ENCODE measurements at regions of chr2 and their contacts with region 1.

Region 1: GRCh38 chr2:209208211-209208610 is 215.6 kb upstream of the MAP2 start:
- DNase-seq: peak; percentile 9
- H3K4me3 ChIP-seq: peak overlapping the region in 2 of 3 experiments; percentile 24 to 34
- H3K27ac ChIP-seq: no peak overlapping the region
- H3K4me1 ChIP-seq: no peaks in the 10 kb centered on the region
- H3K27me3 ChIP-seq: no peaks in the 10 kb centered on the region
- CTCF ChIP-seq: peak; percentile 63 to 76

Region 2: GRCh38 chr2:208392300-208393080 is 815.7 kb before region 1 on chr2:
- CTCF ChIA-PET with region 1: no interaction called
- dilution Hi-C with region 1: no loop called
- in situ Hi-C with region 1: no loop called
- intact Hi-C with region 1: loop called (anchors 1 kb)
- DNase-seq: no peak
- H3K4me3 ChIP-seq: no peak overlapping the region
- H3K27ac ChIP-seq: no peak overlapping the region
- H3K4me1 ChIP-seq: no peaks in the 10 kb centered on the region
- H3K27me3 ChIP-seq: no peaks in the 10 kb centered on the region
- CTCF ChIP-seq: peak; percentile 17 to 20

Region 3: GRCh38 chr2:208407667-208408066 is 800.5 kb before region 1 on chr2:
- CTCF ChIA-PET with region 1: no interaction called
- dilution Hi-C with region 1: no loop called
- in situ Hi-C with region 1: no loop called
- intact Hi-C with region 1: loop called (anchors 1 kb)
- DNase-seq: no peak
- H3K4me3 ChIP-seq: no peak overlapping the region
- H3K27ac ChIP-seq: no peak overlapping the region
- H3K4me1 ChIP-seq: peaks cover 5% of the 10 kb centered on the region
- H3K27me3 ChIP-seq: peaks cover 32% of the 10 kb centered on the region
- CTCF ChIP-seq: peak; percentile 11 to 39

Region 4: DNA sequence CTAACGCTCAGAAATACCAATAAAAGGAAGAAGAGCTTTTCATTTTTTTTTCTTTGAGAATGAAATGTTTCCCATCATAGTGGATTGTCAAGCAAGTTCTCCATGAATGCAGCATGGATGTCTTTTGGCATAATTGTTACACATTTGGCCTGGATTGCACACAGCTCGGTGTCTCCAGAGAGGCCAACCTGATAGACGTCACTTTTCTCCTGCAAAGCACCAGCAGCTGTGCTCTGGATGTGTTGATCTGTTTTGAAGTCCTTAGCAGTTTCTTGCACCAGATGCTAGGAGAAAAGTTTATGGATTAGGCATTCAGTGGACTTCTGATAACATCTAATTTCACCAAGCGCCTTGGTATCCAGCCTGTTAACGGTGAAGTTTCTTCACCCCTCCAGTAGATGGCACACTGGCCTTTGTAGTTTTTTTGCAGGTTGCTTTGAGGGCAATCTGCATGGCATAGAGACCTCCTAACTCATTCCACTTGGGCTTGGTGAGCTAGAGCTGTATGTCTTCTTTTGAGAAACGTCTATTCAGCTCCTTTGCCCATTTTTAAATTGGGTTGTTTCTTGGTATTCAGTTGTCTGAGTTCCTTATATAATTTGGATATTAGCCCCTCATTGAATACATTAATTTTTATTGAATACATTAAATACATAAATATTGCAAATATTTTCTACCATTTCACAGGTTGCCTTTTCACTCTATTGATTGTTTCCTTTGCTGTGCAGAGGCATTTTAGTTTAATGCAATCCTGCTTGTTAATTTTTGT is 741.9 kb before region 1 on chr2:
- CTCF ChIA-PET with region 1: no interaction called
- dilution Hi-C with region 1: no loop called
- in situ Hi-C with region 1: loop called in 1 of 2 experiments (anchors 25 kb)
- intact Hi-C with region 1: loop called (anchors 2 kb)
- DNase-seq: peak; percentile 38
- H3K4me3 ChIP-seq: no peak overlapping the region
- H3K27ac ChIP-seq: no peak overlapping the region
- H3K4me1 ChIP-seq: no peaks in the 10 kb centered on the region
- H3K27me3 ChIP-seq: peaks cover 2% of the 10 kb centered on the region
- CTCF ChIP-seq: peak; percentile 68 to 84

Region 5: GRCh38 chr2:208648368-208648767 is 559.8 kb before region 1 on chr2:
- CTCF ChIA-PET with region 1: interaction called, 11 read pairs
- dilution Hi-C with region 1: no loop called
- in situ Hi-C with region 1: no loop called
- intact Hi-C with region 1: no loop called
- DNase-seq: no peak
- H3K4me3 ChIP-seq: no peak overlapping the region
- H3K27ac ChIP-seq: no peak overlapping the region
- H3K4me1 ChIP-seq: no peaks in the 10 kb centered on the region
- H3K27me3 ChIP-seq: no peaks in the 10 kb centered on the region
- CTCF ChIP-seq: no peak

Region 6: DNA sequence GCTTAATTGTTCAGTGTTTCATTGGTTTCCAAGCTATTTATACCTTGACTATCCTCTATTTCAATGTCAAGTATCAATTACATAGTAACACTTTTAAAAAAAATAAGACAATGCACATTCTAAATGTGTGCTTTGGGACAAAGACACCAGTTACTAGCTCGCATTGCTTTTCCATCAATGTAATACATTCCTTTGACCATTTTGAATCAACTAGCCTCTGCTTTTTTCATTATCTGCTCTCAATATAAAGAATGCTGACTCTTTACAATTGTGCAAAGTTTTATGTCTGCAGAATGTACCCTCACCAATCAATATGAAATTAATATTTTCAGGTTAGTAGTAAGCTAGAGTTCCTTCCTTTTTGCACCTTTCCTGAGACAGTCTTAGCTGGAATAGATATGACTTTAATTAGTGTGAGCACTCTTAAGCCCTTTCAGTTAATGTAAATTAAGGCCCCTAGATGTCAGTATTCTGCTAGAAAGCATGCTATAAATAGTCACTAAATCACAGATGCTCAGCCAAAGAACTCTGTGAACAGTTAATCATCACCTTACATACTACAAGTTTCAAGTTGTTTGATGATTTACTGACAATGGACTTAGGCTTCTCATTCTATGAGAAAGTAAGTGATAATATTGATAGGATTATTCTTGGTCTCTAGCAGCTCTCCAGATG is 388.1 kb before region 1 on chr2:
- CTCF ChIA-PET with region 1: no interaction called
- dilution Hi-C with region 1: no loop called
- in situ Hi-C with region 1: no loop called
- intact Hi-C with region 1: loop called (anchors 1 kb)
- DNase-seq: peak; percentile 13
- H3K4me3 ChIP-seq: no peak overlapping the region
- H3K27ac ChIP-seq: no peak overlapping the region
- H3K4me1 ChIP-seq: no peaks in the 10 kb centered on the region
- H3K27me3 ChIP-seq: no peaks in the 10 kb centered on the region
- CTCF ChIP-seq: peak; percentile 15 to 52

Region 7: DNA sequence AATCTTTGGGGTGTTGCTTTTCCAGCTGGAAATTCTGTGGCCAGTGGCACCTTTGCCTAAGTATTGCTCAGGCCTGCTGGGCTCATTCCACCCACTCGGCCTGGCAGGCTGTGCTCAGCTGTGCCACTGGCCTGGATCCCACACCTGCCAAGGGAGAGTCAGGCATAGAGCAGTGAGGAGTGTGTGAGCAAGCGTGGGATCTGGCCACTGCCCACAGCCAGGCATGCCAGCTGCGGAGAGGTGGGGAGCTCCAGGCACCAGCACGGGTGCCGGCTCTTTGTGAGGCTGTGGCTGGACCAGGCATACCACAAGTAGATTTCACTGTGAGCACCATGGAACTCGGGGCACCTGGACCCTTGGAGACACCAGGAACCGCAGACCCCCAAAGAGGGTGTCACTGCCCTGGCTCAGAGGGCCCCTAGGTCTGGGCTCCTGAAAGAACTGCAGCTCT is 97.6 kb after region 1 on chr2:
- CTCF ChIA-PET with region 1: no interaction called
- dilution Hi-C with region 1: no loop called
- in situ Hi-C with region 1: no loop called
- intact Hi-C with region 1: no loop called
- DNase-seq: no peak
- H3K4me3 ChIP-seq: no peak overlapping the region
- H3K27ac ChIP-seq: no peak overlapping the region
- H3K4me1 ChIP-seq: no peaks in the 10 kb centered on the region
- H3K27me3 ChIP-seq: no peaks in the 10 kb centered on the region
- CTCF ChIP-seq: no peak

Measured in mammary epithelial cell (primary cell).